Transverse colon (tissue), 4 donors: ENCODE measurements at regions of chr7 and their contacts with region 1.

Region 1: GRCh38 chr7:124566576-124566975 is 199.0 kb downstream of the GPR37 start:
- DNase-seq: no peak
- H3K4me3 ChIP-seq: no peak overlapping the region
- H3K27ac ChIP-seq: no peak overlapping the region
- H3K4me1 ChIP-seq: no peaks in the 10 kb centered on the region
- H3K27me3 ChIP-seq: no peaks in the 10 kb centered on the region
- CTCF ChIP-seq: no peak
- EP300 ChIP-seq: no peak
- POLR2A ChIP-seq: no peak

Region 2: GRCh38 chr7:124590814-124591213 is 24.2 kb after region 1 on chr7:
- in situ Hi-C with region 1: no loop called
- intact Hi-C with region 1: loop called (anchors 1 kb)
- DNase-seq: no peak
- H3K4me3 ChIP-seq: no peak overlapping the region
- H3K27ac ChIP-seq: no peak overlapping the region
- H3K4me1 ChIP-seq: no peaks in the 10 kb centered on the region
- H3K27me3 ChIP-seq: no peaks in the 10 kb centered on the region
- CTCF ChIP-seq: no peak
- EP300 ChIP-seq: no peak
- POLR2A ChIP-seq: no peak